T-cell (primary cell): ENCODE measurements at regions of chr7 and their contacts with region 1.

Region 1: GRCh38 chr7:101589976-101590669 is 39.0 kb downstream of the MYL10 start:
- DNase-seq: no peak
- ATAC-seq: no peak
- H3K4me3 ChIP-seq: no peak overlapping the region
- H3K4me3 Mint-ChIP-seq: no peak overlapping the region
- H3K27ac ChIP-seq: no peak overlapping the region
- H3K27ac Mint-ChIP-seq: no peak overlapping the region
- H3K4me1 ChIP-seq: no peaks in the 10 kb centered on the region
- H3K4me1 Mint-ChIP-seq: no peaks in the 10 kb centered on the region
- H3K27me3 ChIP-seq: peaks cover 0 to 3% of the 10 kb centered on the region in 2 experiments
- H3K27me3 Mint-ChIP-seq: peaks cover 0 to 7% of the 10 kb centered on the region in 2 donors

Region 2: DNA sequence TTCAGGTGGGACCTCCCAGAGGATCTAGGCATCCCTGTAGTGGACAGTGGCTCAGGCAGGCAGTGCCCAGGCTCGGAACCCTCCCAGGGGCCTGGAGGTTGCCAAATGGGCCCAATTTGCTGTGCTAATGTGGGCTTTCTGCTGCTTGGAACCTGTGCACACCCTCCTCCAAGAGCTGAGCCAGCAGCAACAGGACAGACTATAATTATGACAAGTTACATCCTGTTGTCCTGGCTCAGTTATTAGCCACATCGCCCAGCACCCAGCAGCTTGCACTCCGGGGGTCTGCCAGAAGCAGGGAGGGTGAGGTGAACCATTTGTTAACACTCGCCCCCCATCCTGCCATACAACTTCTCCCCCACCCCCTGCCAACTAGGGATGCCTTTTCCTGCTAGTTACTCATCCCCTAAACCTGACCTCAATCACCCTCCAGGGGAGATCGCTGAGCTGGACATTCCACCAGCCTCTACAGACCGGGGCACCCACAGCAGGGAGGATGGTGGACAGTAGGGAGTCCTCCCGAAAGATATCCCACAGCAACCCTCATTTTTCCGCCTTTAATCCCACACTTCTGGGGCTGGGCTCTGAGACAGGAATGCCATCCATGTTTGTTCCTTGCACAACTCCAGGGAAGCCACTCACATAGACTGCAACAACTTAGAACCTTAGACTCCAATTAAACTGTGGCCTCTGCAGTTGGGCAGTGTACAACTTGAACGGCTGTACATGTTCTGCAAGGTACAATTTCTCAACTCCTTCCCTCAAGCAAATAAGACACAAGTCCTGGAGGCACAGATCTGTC is 46.9 kb after region 1 on chr7:
- CTCF ChIA-PET with region 1: no interaction called
- POLR2A ChIA-PET with region 1: no interaction called
- DNase-seq: no peak
- ATAC-seq: no peak
- H3K4me3 ChIP-seq: no peak overlapping the region
- H3K4me3 Mint-ChIP-seq: no peak overlapping the region
- H3K27ac ChIP-seq: no peak overlapping the region
- H3K27ac Mint-ChIP-seq: no peak overlapping the region
- H3K4me1 ChIP-seq: no peaks in the 10 kb centered on the region
- H3K4me1 Mint-ChIP-seq: no peaks in the 10 kb centered on the region
- H3K27me3 ChIP-seq: peaks cover 0 to 16% of the 10 kb centered on the region in 2 experiments
- H3K27me3 Mint-ChIP-seq: peaks cover 0 to 4% of the 10 kb centered on the region in 2 donors

Region 3: GRCh38 chr7:101764221-101764620 is 174.1 kb after region 1 on chr7:
- CTCF ChIA-PET with region 1: interaction called in 1 of 2 experiments, 10 read pairs
- POLR2A ChIA-PET with region 1: no interaction called
- DNase-seq: no peak
- ATAC-seq: no peak
- H3K4me3 ChIP-seq: no peak overlapping the region
- H3K4me3 Mint-ChIP-seq: no peak overlapping the region
- H3K27ac ChIP-seq: no peak overlapping the region
- H3K27ac Mint-ChIP-seq: no peak overlapping the region
- H3K4me1 ChIP-seq: no peaks in the 10 kb centered on the region
- H3K4me1 Mint-ChIP-seq: no peaks in the 10 kb centered on the region
- H3K27me3 ChIP-seq: peaks cover 0 to 5% of the 10 kb centered on the region in 2 experiments
- H3K27me3 Mint-ChIP-seq: no peaks in the 10 kb centered on the region